Heart right ventricle (tissue), 16 donors: ENCODE measurements at regions of chr10 and their contacts with region 1.

Region 1: GRCh38 chr10:27911539-27911938 is 87.3 kb downstream of the ODAD2 start:
- DNase-seq: no peak
- ATAC-seq: no peak
- H3K4me3 ChIP-seq: no peak overlapping the region
- H3K27ac ChIP-seq: no peak overlapping the region
- H3K4me1 ChIP-seq: no peaks in the 10 kb centered on the region
- H3K27me3 ChIP-seq: peaks cover 0 to 9% (median 0%) of the 10 kb centered on the region in 7 donors
- CTCF ChIP-seq: no peak

Region 2: DNA sequence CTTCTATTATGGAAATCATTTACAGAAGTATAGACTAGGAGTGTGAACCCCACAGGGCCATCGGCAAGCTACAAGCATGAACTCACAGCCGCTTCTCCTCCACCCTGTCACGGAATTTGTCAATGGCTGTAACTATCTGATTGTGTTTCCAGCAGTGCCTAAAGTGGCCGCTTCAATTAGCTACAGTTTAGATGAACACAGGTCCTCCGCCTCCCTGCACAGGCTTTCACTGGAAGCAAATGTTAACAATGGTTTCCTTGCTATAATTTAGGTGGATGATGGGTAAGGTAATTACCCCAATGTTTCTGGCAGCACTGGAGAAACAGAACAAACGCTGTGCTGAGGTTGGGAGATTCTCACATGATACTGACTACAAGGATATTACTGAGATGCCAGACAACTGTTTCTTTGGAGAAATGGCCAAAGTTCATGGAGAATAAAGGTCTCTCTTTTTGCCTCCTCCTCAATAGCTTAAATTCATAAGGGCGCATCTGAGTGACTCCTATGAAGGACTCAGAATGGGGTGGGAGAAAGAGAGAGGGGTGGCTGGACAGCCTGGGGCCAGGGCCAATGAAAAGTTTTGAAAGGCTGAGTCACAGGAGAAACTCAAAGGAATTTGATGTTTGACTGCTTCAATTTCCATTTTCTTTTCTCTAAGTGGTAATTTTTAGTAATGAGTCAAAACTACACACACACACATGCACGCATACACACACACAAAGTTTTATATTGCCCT is 1644.4 kb after region 1 on chr10:
- intact Hi-C with region 1: loop called in 1 of 10 experiments (anchors 10 kb)
- DNase-seq: no peak
- ATAC-seq: peak in 6 of 8 donors; percentile 20 to 55 (median 30)
- H3K4me3 ChIP-seq: no peak overlapping the region
- H3K27ac ChIP-seq: peak overlapping the region in 5 of 10 donors; percentile 1 to 61 (median 24)
- H3K4me1 ChIP-seq: peaks cover 2 to 35% (median 18%) of the 10 kb centered on the region in 9 donors
- H3K27me3 ChIP-seq: no peaks in the 10 kb centered on the region
- CTCF ChIP-seq: no peak